CD4-positive, alpha-beta T cell (primary cell): ENCODE measurements at regions of chr1 and their contacts with region 1.

Region 1: DNA sequence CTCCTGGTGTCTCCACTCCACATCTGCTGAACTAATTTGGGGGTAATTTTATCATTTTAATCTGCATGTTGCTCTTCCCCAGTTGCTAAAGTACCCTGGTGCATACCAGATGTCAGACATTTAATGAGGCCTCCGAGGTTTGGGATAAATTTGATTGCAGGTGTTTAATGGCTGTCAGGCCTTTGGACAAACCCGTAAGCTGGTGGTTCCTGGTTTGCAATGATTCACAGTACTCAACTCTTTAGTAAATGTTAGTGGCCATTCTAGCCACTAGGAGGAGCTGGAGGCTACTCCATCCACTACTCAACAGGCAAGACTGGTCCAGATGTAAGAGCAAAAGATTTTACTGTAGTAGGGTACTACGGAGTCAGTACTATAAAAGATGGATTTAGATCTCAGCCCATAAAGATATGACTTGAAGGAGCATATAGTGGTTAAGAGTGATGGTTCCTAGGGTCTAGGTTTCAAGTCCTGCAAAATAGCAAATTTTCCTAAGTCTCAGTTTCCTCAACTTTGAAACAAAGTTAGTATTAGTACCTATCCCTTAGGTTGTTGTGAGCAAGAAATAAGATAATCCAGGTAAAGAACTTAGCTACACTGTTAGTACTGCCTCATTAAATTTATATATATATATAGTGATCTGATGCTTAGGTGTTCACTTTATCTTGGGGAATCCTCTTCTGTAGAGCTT is 132.8 kb downstream of the SNX7 start:
- DNase-seq: peak; percentile 25 to 83 (median 36)
- ATAC-seq: peak; percentile 90
- H3K4me3 ChIP-seq: no peak overlapping the region
- H3K4me3 Mint-ChIP-seq: no peak overlapping the region
- H3K27ac ChIP-seq: no peak overlapping the region
- H3K27ac Mint-ChIP-seq: no peak overlapping the region
- H3K4me1 ChIP-seq: peaks cover 4% of the 10 kb centered on the region
- H3K4me1 Mint-ChIP-seq: peaks cover 35% of the 10 kb centered on the region
- H3K27me3 ChIP-seq: no peaks in the 10 kb centered on the region
- H3K27me3 Mint-ChIP-seq: no peaks in the 10 kb centered on the region
- CTCF ChIP-seq: peak; percentile 76

Region 2: GRCh38 chr1:98940722-98941079 is 146.4 kb after region 1 on chr1:
- CTCF ChIA-PET with region 1: interaction called, 4 read pairs
- POLR2A ChIA-PET with region 1: no interaction called
- intact Hi-C with region 1: loop called (anchors 2 kb)
- DNase-seq: no peak
- ATAC-seq: no peak
- H3K4me3 ChIP-seq: no peak overlapping the region
- H3K4me3 Mint-ChIP-seq: no peak overlapping the region
- H3K27ac ChIP-seq: no peak overlapping the region
- H3K27ac Mint-ChIP-seq: no peak overlapping the region
- H3K4me1 ChIP-seq: no peaks in the 10 kb centered on the region
- H3K4me1 Mint-ChIP-seq: no peaks in the 10 kb centered on the region
- H3K27me3 ChIP-seq: no peaks in the 10 kb centered on the region
- H3K27me3 Mint-ChIP-seq: no peaks in the 10 kb centered on the region
- CTCF ChIP-seq: no peak

Region 3: GRCh38 chr1:99170516-99170915 is 376.2 kb after region 1 on chr1:
- CTCF ChIA-PET with region 1: no interaction called
- POLR2A ChIA-PET with region 1: no interaction called
- intact Hi-C with region 1: loop called (anchors 5 to 10 kb)
- DNase-seq: no peak
- ATAC-seq: no peak
- H3K4me3 ChIP-seq: no peak overlapping the region
- H3K4me3 Mint-ChIP-seq: no peak overlapping the region
- H3K27ac ChIP-seq: no peak overlapping the region
- H3K27ac Mint-ChIP-seq: no peak overlapping the region
- H3K4me1 ChIP-seq: no peaks in the 10 kb centered on the region
- H3K4me1 Mint-ChIP-seq: no peaks in the 10 kb centered on the region
- H3K27me3 ChIP-seq: no peaks in the 10 kb centered on the region
- H3K27me3 Mint-ChIP-seq: peaks cover 10% of the 10 kb centered on the region
- CTCF ChIP-seq: no peak

Region 4: DNA sequence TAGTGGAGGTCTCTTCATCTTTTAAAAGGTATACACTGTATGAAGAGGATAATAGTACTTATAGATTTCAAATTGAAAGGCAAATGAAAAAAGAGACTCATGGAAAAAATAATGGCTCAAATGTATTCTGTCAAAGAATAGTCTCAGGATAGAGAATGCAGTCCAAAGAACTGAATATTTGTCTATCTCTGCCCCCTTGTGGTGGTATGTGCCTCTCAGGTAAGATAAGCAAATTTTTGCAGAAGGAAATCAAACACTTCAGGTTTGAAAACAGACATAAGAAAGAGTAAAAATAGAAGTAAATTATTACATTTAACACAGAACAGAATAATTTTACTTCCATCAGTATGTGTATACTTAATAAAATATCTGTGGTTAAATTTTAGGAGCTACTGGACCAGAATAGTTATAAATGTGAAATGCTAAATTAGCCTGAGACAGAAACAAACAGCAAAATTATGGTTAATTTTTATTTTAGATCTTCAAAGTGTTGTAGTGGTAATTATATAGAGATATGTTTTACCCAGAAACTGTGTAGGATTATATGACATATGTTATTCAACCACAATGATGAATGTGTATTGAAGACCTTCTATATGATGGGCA is 687.2 kb after region 1 on chr1:
- CTCF ChIA-PET with region 1: interaction called, 12 read pairs
- POLR2A ChIA-PET with region 1: no interaction called
- intact Hi-C with region 1: loop called (anchors 1 kb)
- DNase-seq: peak in 10 of 14 experiments; percentile 2 to 65 (median 21)
- ATAC-seq: no peak
- H3K4me3 ChIP-seq: no peak overlapping the region
- H3K4me3 Mint-ChIP-seq: no peak overlapping the region
- H3K27ac ChIP-seq: no peak overlapping the region
- H3K27ac Mint-ChIP-seq: no peak overlapping the region
- H3K4me1 ChIP-seq: no peaks in the 10 kb centered on the region
- H3K4me1 Mint-ChIP-seq: no peaks in the 10 kb centered on the region
- H3K27me3 ChIP-seq: no peaks in the 10 kb centered on the region
- H3K27me3 Mint-ChIP-seq: peaks cover 20% of the 10 kb centered on the region
- CTCF ChIP-seq: peak; percentile 74